Sigmoid colon (tissue), 7 donors: ENCODE measurements at regions of chr12 and their contacts with region 1.

Region 1: DNA sequence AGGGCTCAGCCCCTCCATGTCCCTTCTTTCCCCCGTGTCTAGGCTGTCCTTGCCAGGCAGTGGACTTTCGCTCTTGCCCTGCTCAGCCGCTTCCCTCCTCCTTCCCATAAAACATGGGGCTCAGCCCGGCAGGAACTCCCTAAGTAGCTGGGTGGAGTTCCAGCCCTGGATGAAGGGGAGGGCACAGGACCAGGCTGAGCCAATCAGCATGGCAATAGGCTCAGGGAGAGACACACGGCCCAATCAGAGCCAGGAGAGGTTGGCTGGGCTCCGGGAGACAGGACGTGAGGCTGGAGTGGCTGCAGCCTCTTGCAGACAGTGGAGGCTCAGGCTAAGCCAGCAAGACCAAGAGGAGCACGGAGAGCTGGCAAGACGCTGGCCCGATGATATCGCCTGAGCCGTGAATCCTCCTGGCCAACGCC is 54.3 kb downstream of the GALNT9 start:
- DNase-seq: no peak
- H3K4me3 ChIP-seq: no peak overlapping the region
- H3K27ac ChIP-seq: no peak overlapping the region
- H3K4me1 ChIP-seq: peaks cover 0 to 40% (median 33%) of the 10 kb centered on the region in 4 donors
- H3K27me3 ChIP-seq: peaks cover 0 to 36% (median 31%) of the 10 kb centered on the region in 3 donors
- CTCF ChIP-seq: no peak
- EP300 ChIP-seq: no peak
- POLR2A ChIP-seq: no peak

Region 2: GRCh38 chr12:132205271-132206045 is 69.7 kb before region 1 on chr12:
- intact Hi-C with region 1: loop called (anchors 10 kb)
- DNase-seq: no peak
- H3K4me3 ChIP-seq: peak overlapping the region in 3 of 4 donors; percentile 8 to 31 (median 30)
- H3K27ac ChIP-seq: no peak overlapping the region
- H3K4me1 ChIP-seq: peaks cover 0 to 20% (median 17%) of the 10 kb centered on the region in 4 donors
- H3K27me3 ChIP-seq: peaks cover 22 to 68% (median 56%) of the 10 kb centered on the region in 3 donors
- CTCF ChIP-seq: no peak
- EP300 ChIP-seq: no peak
- POLR2A ChIP-seq: no peak

Region 3: GRCh38 chr12:132373901-132374611 is 98.9 kb after region 1 on chr12:
- intact Hi-C with region 1: loop called (anchors 10 kb)
- DNase-seq: peak; percentile 75
- H3K4me3 ChIP-seq: no peak overlapping the region
- H3K27ac ChIP-seq: no peak overlapping the region
- H3K4me1 ChIP-seq: no peaks in the 10 kb centered on the region
- H3K27me3 ChIP-seq: peaks cover 25 to 84% (median 76%) of the 10 kb centered on the region in 3 donors
- CTCF ChIP-seq: peak in 1 of 4 experiments; percentile 33
- EP300 ChIP-seq: no peak
- POLR2A ChIP-seq: no peak